ENCODE measurements at regions of chr1 and their contacts with region 1.

Region 1: DNA sequence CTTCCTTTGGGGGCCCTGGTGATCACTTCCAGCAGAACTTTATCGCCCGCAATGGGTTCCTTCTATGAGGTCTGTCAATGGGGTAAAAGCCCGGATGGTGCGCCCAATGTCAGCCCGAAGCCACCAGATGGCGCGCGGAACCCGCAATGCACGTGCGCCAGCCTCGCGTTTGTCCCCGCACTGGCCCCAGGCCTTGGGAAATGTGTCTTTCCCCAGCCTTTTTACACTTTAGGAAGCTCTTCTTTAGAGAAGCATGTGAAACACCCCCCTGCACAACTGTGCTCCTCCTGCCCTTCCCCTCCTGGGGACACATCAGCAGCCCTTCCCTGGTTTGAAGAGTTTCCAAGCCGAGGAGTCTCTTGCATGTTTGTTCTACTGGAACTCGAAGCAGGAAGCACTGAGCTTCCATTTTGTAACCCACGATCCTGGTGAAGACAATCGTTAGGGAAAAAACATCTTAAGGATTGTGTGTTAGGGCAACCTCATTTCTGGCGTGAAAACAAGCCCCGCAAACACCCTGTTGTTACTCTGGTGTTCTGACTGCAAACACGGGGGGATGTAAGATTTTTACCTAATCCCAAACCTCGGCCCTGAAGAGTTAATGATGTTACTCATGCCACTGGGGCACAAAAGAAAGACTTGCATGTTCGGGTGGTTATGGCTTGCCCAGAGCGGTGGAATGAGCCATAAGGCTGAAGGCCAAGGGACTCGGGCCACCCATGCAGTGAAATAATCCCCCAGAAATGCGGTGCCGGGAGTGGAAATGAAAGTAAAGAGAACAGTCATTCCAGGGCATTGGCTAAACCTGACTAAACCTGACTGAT is 20.4 kb upstream of the TARBP1 start:
- DNase-seq: peak; percentile 97
- ATAC-seq: peak; percentile 97

Region 2: DNA sequence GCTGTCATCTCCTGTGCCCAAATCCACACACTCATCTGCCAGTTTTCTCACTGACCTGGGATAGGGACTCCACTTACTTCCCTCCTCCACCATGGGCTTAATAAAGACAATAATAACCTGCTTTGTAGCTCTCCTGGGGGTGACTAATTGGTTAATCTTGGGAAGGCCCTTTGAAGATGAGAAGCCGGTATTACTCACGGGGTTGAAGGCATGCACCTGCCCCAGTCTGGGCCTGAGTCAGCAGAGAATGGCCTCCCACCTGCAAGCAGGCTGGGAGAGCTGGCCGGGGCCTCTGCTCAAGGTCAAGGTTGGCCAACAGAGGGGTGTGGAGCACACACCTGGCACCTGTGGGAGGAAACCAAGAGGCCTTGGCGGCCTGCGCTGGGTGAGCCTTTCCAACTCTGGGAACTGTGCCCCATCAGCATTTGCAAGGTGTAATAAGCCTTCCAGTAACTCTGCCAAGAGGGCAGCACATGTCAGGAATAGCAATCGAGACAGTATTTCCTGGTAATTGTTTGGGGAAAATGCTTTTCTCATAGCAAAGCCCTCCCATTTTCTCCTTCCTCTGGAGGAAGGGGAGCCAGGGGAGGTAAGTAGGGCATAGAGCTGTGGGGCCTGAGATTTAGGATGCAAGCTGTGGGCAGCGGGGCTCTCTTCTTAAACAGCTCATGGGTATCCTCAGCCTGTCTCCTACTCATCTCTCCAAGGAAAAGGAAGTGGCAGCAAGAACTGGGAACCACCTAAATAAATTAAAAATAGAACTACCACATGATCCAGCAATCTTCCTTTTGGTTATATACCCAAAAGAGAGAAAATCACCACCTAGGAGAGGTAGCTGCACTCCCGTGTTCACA is 580.3 kb after region 1 on chr1:
- intact Hi-C with region 1: loop called (anchors 5 kb)
- DNase-seq: no peak
- ATAC-seq: no peak

Measured in sciatic nerve (tissue), 2 donors.